Right lobe of liver (tissue), 6 donors: ENCODE measurements at regions of chr7 and their contacts with region 1.

Region 1: DNA sequence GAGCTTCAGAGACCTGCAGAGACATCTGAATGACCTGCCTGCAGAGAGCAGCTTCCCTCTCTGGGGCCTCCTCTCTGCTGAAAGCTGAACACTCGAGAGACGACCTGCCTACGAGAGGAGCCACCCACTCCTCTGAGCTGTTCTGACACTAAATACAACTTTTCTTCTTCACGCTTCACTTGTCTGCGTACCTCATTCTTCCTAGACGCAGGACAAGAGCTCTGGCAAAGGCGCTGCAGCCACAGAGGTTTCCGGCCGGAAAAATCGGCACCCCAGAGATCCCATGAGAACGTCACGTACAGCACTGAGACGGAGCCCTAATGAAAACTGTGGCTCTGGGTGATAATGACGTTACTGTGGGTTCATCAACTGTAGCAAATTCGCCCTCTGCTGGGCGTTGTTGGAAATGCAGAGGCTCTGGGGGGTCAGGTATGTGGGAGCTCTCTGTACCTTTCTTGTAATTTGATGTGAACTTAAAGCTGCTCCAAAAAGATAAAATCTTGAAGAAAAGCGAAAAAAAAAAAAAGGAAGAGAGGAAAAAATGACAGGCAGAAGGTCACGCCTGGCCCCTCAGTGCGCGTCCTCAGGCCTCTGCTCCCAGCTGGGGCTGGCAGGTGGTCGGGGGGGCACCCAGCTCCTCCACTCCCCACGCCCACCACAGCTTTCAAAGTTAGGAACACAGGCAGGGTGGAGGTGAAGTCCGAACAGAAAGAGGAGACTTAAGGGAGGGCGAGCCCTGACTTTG is 120.7 kb downstream of the DYNC2I1 start:
- DNase-seq: peak; percentile 80 to 83 (median 82)
- ATAC-seq: peak; percentile 90 to 98 (median 96)
- H3K4me3 ChIP-seq: peak overlapping the region; percentile 9 to 17 (median 13)
- H3K27ac ChIP-seq: no peak overlapping the region
- H3K4me1 ChIP-seq: no peaks in the 10 kb centered on the region
- H3K27me3 ChIP-seq: no peaks in the 10 kb centered on the region
- CTCF ChIP-seq: peak; percentile 89 to 94 (median 90)
- POLR2A ChIP-seq: no peak

Region 2: DNA sequence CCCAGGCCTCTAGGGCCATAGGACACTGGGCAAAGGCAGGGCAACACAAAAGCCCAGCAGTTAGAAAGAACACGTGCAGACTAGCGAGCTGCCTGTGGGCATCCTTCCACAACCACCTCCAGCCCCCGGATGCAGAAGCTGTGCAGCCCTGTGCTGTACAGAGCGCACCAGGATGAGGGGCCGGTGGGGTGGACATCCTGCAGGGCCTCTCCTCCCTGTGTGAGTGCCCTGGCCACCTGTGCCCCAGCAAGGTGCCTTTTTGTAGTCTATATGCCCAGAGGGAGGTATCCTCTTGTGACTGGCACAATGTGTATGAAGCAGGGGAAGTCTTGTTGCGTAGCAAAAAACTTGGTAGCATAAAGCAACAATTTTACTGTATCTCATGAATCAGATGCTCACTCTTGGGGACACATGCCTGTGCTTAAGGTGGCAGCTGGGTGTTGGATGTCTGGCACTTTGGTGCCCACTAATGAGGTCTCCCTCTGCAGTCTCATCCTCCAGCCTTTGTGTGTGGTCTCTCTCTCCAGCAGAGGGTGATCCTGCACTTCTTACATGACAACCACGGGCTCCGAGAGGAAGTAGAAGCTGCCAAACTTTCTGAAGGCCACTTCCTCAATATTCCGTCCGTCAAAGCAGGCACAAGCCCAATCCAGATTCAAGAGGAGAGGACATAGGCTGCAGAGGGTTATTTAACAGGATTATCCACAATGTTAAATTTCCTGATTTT is 281.1 kb before region 1 on chr7:
- intact Hi-C with region 1: loop called in 1 of 2 experiments (anchors 10 kb)
- DNase-seq: peak in 2 of 3 donors; percentile 39 to 66
- ATAC-seq: peak; percentile 92 to 100 (median 96)
- H3K4me3 ChIP-seq: no peak overlapping the region
- H3K27ac ChIP-seq: no peak overlapping the region
- H3K4me1 ChIP-seq: no peaks in the 10 kb centered on the region
- H3K27me3 ChIP-seq: no peaks in the 10 kb centered on the region
- CTCF ChIP-seq: peak; percentile 43 to 65 (median 50)
- POLR2A ChIP-seq: no peak

Region 3: DNA sequence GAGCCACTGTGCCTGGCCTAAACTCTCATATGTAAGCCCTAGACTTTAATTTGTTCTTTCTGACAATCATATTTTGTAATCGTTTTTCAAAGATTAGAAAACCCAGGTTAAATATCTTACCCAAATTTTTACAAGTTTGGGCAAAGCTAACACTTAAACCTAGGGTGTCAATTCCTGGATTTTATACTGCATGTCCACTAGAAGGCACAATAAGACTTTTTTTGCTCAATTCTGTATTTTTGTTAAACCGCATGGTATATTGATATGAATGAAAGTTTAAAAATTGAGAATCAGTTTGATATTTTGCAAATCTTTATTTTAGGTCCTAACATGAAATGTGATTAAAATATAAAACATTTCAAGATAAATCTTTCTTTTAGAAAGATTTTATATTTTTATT is 91.4 kb before region 1 on chr7:
- intact Hi-C with region 1: loop called in 1 of 2 experiments (anchors 10 kb)
- DNase-seq: no peak
- ATAC-seq: peak in 1 of 4 donors; percentile 35
- H3K4me3 ChIP-seq: no peak overlapping the region
- H3K27ac ChIP-seq: no peak overlapping the region
- H3K4me1 ChIP-seq: peaks cover 0 to 14% (median 1%) of the 10 kb centered on the region in 4 donors
- H3K27me3 ChIP-seq: no peaks in the 10 kb centered on the region
- CTCF ChIP-seq: peak; percentile 35 to 59 (median 48)
- POLR2A ChIP-seq: no peak